ENCODE measurements at regions of chr7 and their contacts with region 1.

Region 1: DNA sequence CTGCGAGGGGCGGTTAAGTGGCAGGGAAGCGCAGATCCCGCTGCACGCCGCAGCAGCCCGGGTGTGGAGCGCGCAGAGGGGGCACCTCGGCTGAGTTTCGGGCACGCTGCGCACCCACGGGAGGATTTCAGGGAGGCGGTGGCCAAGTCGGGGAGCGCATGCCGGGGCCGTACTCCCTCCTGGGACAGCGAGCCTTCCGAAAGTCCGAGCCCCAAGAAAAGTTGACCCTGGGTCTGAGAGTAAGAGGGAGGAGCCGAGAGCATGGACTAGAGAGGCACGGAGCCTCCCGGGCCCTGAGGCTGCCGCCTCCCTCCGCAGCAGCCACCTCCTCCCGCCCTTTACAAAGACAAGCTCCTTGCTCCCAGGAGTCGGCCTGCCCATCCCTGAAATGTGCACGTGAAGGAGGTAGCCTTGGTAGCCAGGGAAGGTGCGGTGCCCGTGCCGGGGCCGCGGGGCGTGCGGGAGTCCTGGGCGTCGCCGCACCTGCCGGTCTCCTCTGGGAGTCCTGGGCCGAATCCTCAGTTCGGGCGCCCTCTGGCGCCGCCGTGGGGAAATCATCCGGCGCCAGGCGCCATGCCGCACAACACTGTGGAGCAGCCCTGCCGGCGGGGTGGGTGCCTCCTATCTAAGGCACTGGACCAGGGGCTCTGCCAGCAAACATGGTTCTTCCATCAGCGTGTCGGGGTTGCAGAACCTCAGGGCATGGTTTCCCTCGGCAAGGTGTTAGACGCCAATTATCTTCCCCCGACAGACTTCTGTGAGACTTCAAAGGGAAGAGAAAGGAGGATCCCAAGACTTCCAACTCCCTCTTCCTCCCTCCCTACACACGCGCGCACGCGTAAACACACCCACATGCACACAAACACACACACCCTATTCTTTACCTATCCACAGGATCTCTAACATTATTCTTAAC is 104.0 kb downstream of the TRIL start:
- DNase-seq: peak; percentile 26
- ATAC-seq: peak; percentile 100
- H3K4me3 ChIP-seq: peak overlapping the region; percentile 74
- H3K27ac ChIP-seq: no peak overlapping the region
- H3K4me1 ChIP-seq: 0 out of 2 replicates have a peak, but pooled peaks cover 3% of the 10 kb centered on the region
- H3K27me3 ChIP-seq: peaks cover 1 to 10% of the 10 kb centered on the region in 2 experiments; a peak in 3 of 4 replicates
- CTCF ChIP-seq: peak; percentile 85 to 95 (median 93); a peak in 5 of 6 replicates
- EP300 ChIP-seq: no peak
- POLR2A ChIP-seq: no peak
- RAD21 ChIP-seq: peak; percentile 90

Region 2: DNA sequence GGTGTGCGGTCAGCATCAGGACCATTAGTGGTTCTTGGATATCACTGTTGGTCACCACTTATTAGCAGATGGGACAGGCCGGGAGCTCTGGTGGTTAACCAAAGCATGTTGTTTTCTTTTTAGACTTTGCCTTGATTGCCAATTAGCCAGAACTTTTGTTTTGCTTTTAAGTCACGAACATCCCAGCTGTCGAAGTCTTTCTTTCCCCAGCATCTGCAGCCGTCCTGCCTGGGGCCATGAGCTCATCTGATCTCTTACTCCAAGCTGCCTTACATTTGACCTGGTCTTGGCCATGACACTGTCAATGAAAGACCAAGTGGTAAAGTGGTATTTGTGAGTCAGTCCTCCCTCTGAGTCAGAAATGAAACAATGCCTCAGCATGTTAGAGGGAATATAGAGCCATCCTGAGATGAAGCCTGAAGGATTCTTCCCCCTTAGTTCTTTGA is 495.6 kb before region 1 on chr7:
- CTCF ChIA-PET with region 1: interaction called, 33 read pairs
- POLR2A ChIA-PET with region 1: no interaction called
- RAD21 ChIA-PET with region 1: interaction called, 3 read pairs
- SMC1A ChIA-PET with region 1: interaction called, 15 read pairs
- in situ Hi-C with region 1: no loop called
- intact Hi-C with region 1: loop called (anchors 5 kb)
- DNase-seq: no peak
- ATAC-seq: peak; percentile 45; the same call in 2 of the 3 replicates
- H3K4me3 ChIP-seq: no peak overlapping the region
- H3K27ac ChIP-seq: no peak overlapping the region
- H3K4me1 ChIP-seq: no peaks in the 10 kb centered on the region
- H3K27me3 ChIP-seq: no peaks in the 10 kb centered on the region
- CTCF ChIP-seq: no peak
- EP300 ChIP-seq: no peak
- POLR2A ChIP-seq: no peak
- RAD21 ChIP-seq: no peak

Region 3: GRCh38 chr7:28383975-28384374 is 470.1 kb before region 1 on chr7:
- CTCF ChIA-PET with region 1: interaction called, 24 read pairs
- POLR2A ChIA-PET with region 1: no interaction called
- RAD21 ChIA-PET with region 1: interaction called, 8 read pairs
- SMC1A ChIA-PET with region 1: interaction called, 25 read pairs
- in situ Hi-C with region 1: loop called (anchors 5 kb)
- intact Hi-C with region 1: loop called (anchors 1 kb)
- DNase-seq: no peak
- ATAC-seq: no peak
- H3K4me3 ChIP-seq: no peak overlapping the region
- H3K27ac ChIP-seq: no peak overlapping the region
- H3K4me1 ChIP-seq: no peaks in the 10 kb centered on the region; the same call in 1 of the 2 replicates
- H3K27me3 ChIP-seq: no peaks in the 10 kb centered on the region
- CTCF ChIP-seq: no peak
- EP300 ChIP-seq: no peak
- POLR2A ChIP-seq: no peak
- RAD21 ChIP-seq: no peak

Region 4: GRCh38 chr7:28542410-28542809 is 311.7 kb before region 1 on chr7:
- CTCF ChIA-PET with region 1: interaction called, 3 read pairs
- POLR2A ChIA-PET with region 1: no interaction called
- RAD21 ChIA-PET with region 1: no interaction called
- SMC1A ChIA-PET with region 1: interaction called, 3 read pairs
- in situ Hi-C with region 1: no loop called
- intact Hi-C with region 1: loop called (anchors 10 kb)
- DNase-seq: no peak
- ATAC-seq: no peak
- H3K4me3 ChIP-seq: no peak overlapping the region
- H3K27ac ChIP-seq: no peak overlapping the region
- H3K4me1 ChIP-seq: peaks cover 8% of the 10 kb centered on the region
- H3K27me3 ChIP-seq: no peaks in the 10 kb centered on the region
- CTCF ChIP-seq: no peak
- EP300 ChIP-seq: no peak
- POLR2A ChIP-seq: no peak
- RAD21 ChIP-seq: no peak

Region 5: GRCh38 chr7:28758186-28758585 is 95.9 kb before region 1 on chr7:
- CTCF ChIA-PET with region 1: no interaction called
- POLR2A ChIA-PET with region 1: no interaction called
- RAD21 ChIA-PET with region 1: no interaction called
- SMC1A ChIA-PET with region 1: no interaction called
- in situ Hi-C with region 1: no loop called
- intact Hi-C with region 1: no loop called
- DNase-seq: no peak
- ATAC-seq: no peak
- H3K4me3 ChIP-seq: no peak overlapping the region
- H3K27ac ChIP-seq: no peak overlapping the region
- H3K4me1 ChIP-seq: no peaks in the 10 kb centered on the region
- H3K27me3 ChIP-seq: no peaks in the 10 kb centered on the region
- CTCF ChIP-seq: no peak
- EP300 ChIP-seq: no peak
- POLR2A ChIP-seq: no peak
- RAD21 ChIP-seq: no peak

Region 6: GRCh38 chr7:28778786-28779185 is 75.3 kb before region 1 on chr7:
- CTCF ChIA-PET with region 1: no interaction called
- POLR2A ChIA-PET with region 1: no interaction called
- RAD21 ChIA-PET with region 1: no interaction called
- SMC1A ChIA-PET with region 1: no interaction called
- in situ Hi-C with region 1: no loop called
- intact Hi-C with region 1: no loop called
- DNase-seq: no peak
- ATAC-seq: no peak
- H3K4me3 ChIP-seq: no peak overlapping the region
- H3K27ac ChIP-seq: no peak overlapping the region
- H3K4me1 ChIP-seq: peaks cover 4% of the 10 kb centered on the region
- H3K27me3 ChIP-seq: no peaks in the 10 kb centered on the region
- CTCF ChIP-seq: no peak
- EP300 ChIP-seq: no peak
- POLR2A ChIP-seq: no peak
- RAD21 ChIP-seq: no peak

Region 7: DNA sequence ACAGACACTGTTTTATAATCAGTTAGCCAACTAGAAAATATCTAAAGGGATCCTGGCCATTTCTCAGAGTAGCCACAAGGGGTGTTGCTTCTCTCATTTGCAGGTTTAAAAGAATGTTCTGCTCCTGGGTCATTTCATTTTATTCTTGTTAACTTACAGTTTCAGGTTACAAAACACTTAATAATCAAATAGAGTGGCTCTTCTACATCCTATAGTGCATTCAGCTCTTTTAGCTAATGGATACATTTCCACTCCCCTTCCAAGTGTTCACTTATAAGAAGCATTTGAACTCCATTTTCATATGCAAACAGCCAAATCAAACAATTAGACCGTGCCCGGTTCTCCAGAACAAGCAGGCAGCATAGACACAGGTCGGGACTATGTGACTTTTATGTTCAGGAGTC is 13.5 kb before region 1 on chr7:
- CTCF ChIA-PET with region 1: interaction called, 15 read pairs
- POLR2A ChIA-PET with region 1: no interaction called
- RAD21 ChIA-PET with region 1: interaction called, 3 read pairs
- SMC1A ChIA-PET with region 1: interaction called, 8 read pairs
- in situ Hi-C with region 1: no loop called
- intact Hi-C with region 1: no loop called
- DNase-seq: no peak
- ATAC-seq: peak; percentile 70
- H3K4me3 ChIP-seq: no peak overlapping the region
- H3K27ac ChIP-seq: no peak overlapping the region
- H3K4me1 ChIP-seq: no peaks in the 10 kb centered on the region
- H3K27me3 ChIP-seq: 0 out of 4 replicates have a peak, but pooled peaks cover 0 to 4% of the 10 kb centered on the region in 2 experiments
- CTCF ChIP-seq: peak; percentile 27 to 57 (median 40); a peak in 5 of 6 replicates
- EP300 ChIP-seq: no peak
- POLR2A ChIP-seq: no peak
- RAD21 ChIP-seq: peak; percentile 17; the same call in 1 of the 2 replicates